AG04449 (cell line): ENCODE measurements at regions of chr7 and their contacts with region 1.

Region 1: DNA sequence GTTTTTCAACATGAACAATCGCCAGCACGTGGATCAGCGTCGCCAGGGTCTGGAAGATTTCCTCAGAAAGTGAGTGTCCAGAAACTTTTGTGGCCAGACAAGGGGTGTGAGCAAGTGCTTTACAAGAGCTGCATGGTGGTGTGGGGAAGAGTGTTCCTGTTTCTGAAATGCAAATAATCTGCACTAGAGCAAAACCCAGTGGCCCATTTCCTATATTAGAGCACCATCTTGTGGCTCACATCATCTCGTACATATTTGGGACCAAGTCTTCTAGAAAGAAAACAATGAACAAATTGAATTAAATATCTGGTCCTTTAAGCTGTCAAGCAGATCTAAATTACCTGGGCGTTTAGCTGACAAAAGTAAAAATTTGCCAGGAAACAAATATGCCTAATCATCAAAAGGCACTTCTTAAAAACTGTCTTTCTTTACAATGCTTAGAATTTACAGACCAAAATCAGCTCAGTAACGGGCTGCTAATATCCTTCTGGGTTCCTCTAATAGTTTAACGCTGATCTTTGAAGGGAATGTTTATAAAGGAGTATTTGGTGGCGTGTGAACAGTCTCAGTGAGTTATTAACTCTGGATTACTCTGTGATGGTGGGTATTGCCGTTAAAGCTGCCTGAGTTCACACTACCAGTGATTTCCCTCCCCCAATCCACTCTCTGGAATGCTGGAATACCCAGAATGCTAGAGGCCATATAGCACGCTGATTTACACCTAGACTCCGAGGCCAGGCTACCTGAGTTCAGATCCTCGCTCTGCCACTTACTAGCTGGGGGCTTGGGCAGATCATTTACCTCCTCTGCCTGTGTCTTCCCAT is 73.6 kb downstream of the SNX10 start:
- DNase-seq: peak; percentile 14
- H3K4me3 ChIP-seq: no peak overlapping the region
- CTCF ChIP-seq: peak; percentile 49

Region 2: DNA sequence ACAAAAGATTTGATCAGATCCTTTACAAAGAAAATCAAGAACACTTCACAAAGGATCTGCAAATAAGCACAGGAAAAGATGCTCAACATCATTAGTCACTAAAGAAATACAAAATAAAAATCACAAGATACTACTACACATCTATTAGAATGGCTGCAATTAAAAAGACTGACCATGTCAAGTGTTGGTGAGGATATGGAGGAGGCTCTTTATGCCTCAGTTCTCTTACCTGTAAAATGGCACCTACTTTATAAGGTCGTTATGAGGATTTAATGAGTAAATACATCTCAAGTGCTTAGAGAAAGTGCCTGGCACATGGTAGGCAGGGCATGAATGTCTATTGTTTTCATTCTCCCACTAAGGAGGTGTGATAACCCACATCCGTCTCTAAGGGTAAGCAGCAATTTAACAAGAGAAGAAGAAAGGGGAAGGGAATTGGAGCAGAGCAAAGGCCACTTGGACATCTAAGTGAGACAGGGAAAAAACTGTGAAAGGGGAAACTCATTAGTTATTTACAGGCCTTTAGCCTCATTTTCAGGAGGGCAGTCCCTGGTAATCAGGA is 370.8 kb before region 1 on chr7:
- CTCF ChIA-PET with region 1: no interaction called
- POLR2A ChIA-PET with region 1: no interaction called
- DNase-seq: no peak
- H3K4me3 ChIP-seq: no peak overlapping the region
- CTCF ChIP-seq: no peak

Region 3: GRCh38 chr7:26078437-26079336 is 286.6 kb before region 1 on chr7:
- CTCF ChIA-PET with region 1: interaction called, 18 read pairs
- POLR2A ChIA-PET with region 1: no interaction called
- DNase-seq: no peak
- H3K4me3 ChIP-seq: no peak overlapping the region
- CTCF ChIP-seq: peak; percentile 35

Region 4: GRCh38 chr7:26376175-26376917 is 11.1 kb after region 1 on chr7:
- CTCF ChIA-PET with region 1: interaction called, 10 read pairs
- POLR2A ChIA-PET with region 1: no interaction called
- DNase-seq: no peak
- H3K4me3 ChIP-seq: no peak overlapping the region
- CTCF ChIP-seq: no peak

Region 5: GRCh38 chr7:26500749-26501352 is 135.6 kb after region 1 on chr7:
- CTCF ChIA-PET with region 1: interaction called, 11 read pairs
- POLR2A ChIA-PET with region 1: no interaction called
- DNase-seq: no peak
- H3K4me3 ChIP-seq: no peak overlapping the region
- CTCF ChIP-seq: peak; percentile 34

Region 6: GRCh38 chr7:26686448-26686981 is 321.2 kb after region 1 on chr7:
- CTCF ChIA-PET with region 1: interaction called, 27 read pairs
- POLR2A ChIA-PET with region 1: no interaction called
- DNase-seq: no peak
- H3K4me3 ChIP-seq: no peak overlapping the region
- CTCF ChIP-seq: peak; percentile 12